B cell (primary cell): ENCODE measurements at regions of chr14 and their contacts with region 1.

Region 1: DNA sequence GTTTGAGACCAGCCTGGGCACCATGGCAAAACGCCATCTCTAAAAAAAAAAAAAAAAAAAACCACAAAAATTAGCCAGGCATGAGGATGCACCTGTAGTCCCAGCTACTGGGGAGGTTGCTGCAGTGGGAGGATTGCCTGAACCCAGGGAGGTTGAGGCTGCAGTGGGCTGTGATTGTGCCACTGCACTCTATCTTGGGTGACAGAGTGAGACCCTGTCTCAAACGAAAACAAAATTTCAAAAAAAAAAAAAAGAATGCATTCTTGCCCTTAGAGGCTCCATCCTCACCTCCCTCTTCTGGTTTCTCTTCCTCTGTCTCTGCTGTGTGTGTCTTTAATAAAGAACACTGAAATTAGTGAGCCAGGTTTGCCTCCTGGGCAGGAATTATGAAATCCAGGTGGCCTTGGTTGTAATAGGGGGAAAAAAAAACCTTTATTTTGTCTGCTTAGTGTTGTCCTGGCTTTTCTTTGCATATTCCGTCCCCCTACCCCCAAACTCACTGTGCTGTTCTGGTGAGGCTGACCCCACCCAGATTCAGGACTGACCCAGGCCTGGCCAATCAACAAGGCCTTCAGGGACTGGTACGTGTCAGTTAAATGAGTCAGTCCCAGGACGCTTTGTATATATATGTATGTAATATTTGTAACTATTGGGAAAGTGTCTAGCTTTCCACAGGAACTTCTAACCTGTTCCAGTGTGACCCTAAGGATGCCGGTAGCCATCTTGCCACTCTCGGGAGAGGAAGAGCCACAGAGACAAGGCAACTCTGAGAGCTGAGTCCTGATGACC is 107.6 kb downstream of the VCPKMT start:
- DNase-seq: peak; percentile 66
- ATAC-seq: peak; percentile 74
- H3K4me3 ChIP-seq: peak overlapping the region in 2 of 5 experiments; percentile 21 to 23
- H3K4me3 Mint-ChIP-seq: peak overlapping the region; percentile 53
- H3K27ac ChIP-seq: peak overlapping the region; percentile 35 to 80
- H3K27ac Mint-ChIP-seq: peak overlapping the region; percentile 83
- H3K4me1 ChIP-seq: peaks cover 40 to 49% of the 10 kb centered on the region in 2 donors
- H3K4me1 Mint-ChIP-seq: peaks cover 63% of the 10 kb centered on the region
- H3K27me3 ChIP-seq: no peaks in the 10 kb centered on the region
- H3K27me3 Mint-ChIP-seq: no peaks in the 10 kb centered on the region
- CTCF ChIP-seq: no peak

Region 2: DNA sequence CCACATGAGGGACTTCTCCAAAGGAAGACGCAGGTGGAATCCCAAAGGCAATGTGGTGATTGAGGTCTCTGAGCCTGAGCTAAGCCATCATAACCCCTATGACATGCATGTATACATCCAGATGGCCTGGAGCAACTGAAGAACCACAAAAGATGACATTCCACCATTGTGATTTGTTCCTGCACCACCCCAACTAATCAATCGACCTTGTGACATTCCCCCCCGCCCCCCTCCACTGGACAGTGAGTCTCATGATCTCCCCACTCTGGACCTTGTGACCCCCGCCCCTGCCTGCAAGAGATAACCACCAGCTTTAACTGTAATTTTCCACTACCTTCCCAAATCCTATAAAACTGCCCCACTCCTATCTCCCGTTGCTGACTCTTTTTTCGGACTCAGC is 19.7 kb after region 1 on chr14:
- CTCF ChIA-PET with region 1: no interaction called
- POLR2A ChIA-PET with region 1: no interaction called
- intact Hi-C with region 1: no loop called
- DNase-seq: no peak
- ATAC-seq: no peak
- H3K4me3 ChIP-seq: no peak overlapping the region
- H3K4me3 Mint-ChIP-seq: no peak overlapping the region
- H3K27ac ChIP-seq: no peak overlapping the region
- H3K27ac Mint-ChIP-seq: peak overlapping the region; percentile 3
- H3K4me1 ChIP-seq: no peaks in the 10 kb centered on the region
- H3K4me1 Mint-ChIP-seq: peaks cover 5% of the 10 kb centered on the region
- H3K27me3 ChIP-seq: no peaks in the 10 kb centered on the region
- H3K27me3 Mint-ChIP-seq: no peaks in the 10 kb centered on the region
- CTCF ChIP-seq: no peak

Region 3: GRCh38 chr14:50038398-50039119 is 29.8 kb after region 1 on chr14:
- CTCF ChIA-PET with region 1: interaction called, 14 read pairs
- POLR2A ChIA-PET with region 1: interaction called, 7 read pairs
- intact Hi-C with region 1: loop called (anchors 1 kb)
- DNase-seq: peak; percentile 50
- ATAC-seq: peak; percentile 47
- H3K4me3 ChIP-seq: no peak overlapping the region
- H3K4me3 Mint-ChIP-seq: peak overlapping the region; percentile 7
- H3K27ac ChIP-seq: peak overlapping the region in 1 of 2 donors; percentile 38
- H3K27ac Mint-ChIP-seq: peak overlapping the region; percentile 53
- H3K4me1 ChIP-seq: peaks cover 36 to 38% of the 10 kb centered on the region in 2 donors
- H3K4me1 Mint-ChIP-seq: peaks cover 45% of the 10 kb centered on the region
- H3K27me3 ChIP-seq: no peaks in the 10 kb centered on the region
- H3K27me3 Mint-ChIP-seq: no peaks in the 10 kb centered on the region
- CTCF ChIP-seq: no peak

Region 4: DNA sequence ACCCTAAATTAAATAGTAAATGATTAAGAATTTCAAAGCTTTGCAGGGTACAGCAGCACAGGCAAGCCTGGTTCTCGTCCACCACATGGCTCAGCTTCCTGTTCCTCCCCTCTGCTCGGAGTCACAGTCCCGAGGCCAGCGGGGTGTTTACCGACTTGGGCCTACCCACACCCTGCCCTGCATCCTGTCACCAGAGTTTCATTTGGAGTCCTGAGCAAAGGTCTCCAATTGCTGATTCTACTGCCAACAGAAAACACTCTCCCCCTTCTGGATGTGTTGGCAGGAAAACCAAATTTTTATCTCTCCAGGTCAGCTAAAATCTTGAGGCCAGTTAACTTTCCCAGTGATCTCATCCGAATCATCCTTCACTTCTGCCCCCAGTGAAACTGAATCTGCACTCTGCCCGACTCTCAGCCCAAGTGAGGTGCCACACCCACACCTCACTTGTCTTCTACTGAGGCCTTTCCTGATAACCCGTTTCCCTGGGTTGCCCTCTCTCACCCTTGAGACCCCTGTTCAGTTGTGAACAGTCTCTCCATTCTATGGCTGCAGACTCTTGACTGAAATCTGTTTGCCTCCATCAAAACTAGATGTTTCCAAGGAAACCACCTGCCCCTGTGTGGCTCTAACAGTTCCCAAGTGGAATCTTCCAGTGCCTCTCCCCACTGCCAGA is 36.4 kb after region 1 on chr14:
- CTCF ChIA-PET with region 1: interaction called, 15 read pairs
- POLR2A ChIA-PET with region 1: interaction called, 4 read pairs
- intact Hi-C with region 1: loop called (anchors 1 kb)
- DNase-seq: peak; percentile 75
- ATAC-seq: peak; percentile 71
- H3K4me3 ChIP-seq: no peak overlapping the region
- H3K4me3 Mint-ChIP-seq: peak overlapping the region; percentile 49
- H3K27ac ChIP-seq: peak overlapping the region; percentile 92 to 95
- H3K27ac Mint-ChIP-seq: peak overlapping the region; percentile 88
- H3K4me1 ChIP-seq: peaks cover 60 to 62% of the 10 kb centered on the region in 2 donors
- H3K4me1 Mint-ChIP-seq: peaks cover 76% of the 10 kb centered on the region
- H3K27me3 ChIP-seq: no peaks in the 10 kb centered on the region
- H3K27me3 Mint-ChIP-seq: no peaks in the 10 kb centered on the region
- CTCF ChIP-seq: no peak